Activated CD4-positive, alpha-beta memory T cell treated with anti-CD3 and anti-CD28 coated beads, Interleukin-2, amount 10 ng/mL, durations not matched to agents 7 days and 5 days (primary cell): ENCODE measurements at regions of chr6 and their contacts with region 1.

Region 1: GRCh38 chr6:16698997-16699868 is 62.0 kb downstream of the ATXN1 start:
- DNase-seq: no peak
- H3K4me3 Mint-ChIP-seq: peak overlapping the region; percentile 78
- H3K27ac Mint-ChIP-seq: peak overlapping the region; percentile 96
- H3K4me1 Mint-ChIP-seq: peaks cover 83% of the 10 kb centered on the region
- H3K27me3 Mint-ChIP-seq: no peaks in the 10 kb centered on the region

Region 2: GRCh38 chr6:16608444-16608843 is 90.8 kb before region 1 on chr6:
- CTCF ChIA-PET with region 1: no interaction called
- POLR2A ChIA-PET with region 1: no interaction called
- DNase-seq: no peak
- H3K4me3 Mint-ChIP-seq: no peak overlapping the region
- H3K27ac Mint-ChIP-seq: no peak overlapping the region
- H3K4me1 Mint-ChIP-seq: peaks cover 8% of the 10 kb centered on the region
- H3K27me3 Mint-ChIP-seq: no peaks in the 10 kb centered on the region

Region 3: GRCh38 chr6:16712931-16713484 is 13.8 kb after region 1 on chr6:
- CTCF ChIA-PET with region 1: interaction called, 13 read pairs
- POLR2A ChIA-PET with region 1: interaction called, 35 read pairs
- DNase-seq: no peak
- H3K4me3 Mint-ChIP-seq: peak overlapping the region; percentile 66
- H3K27ac Mint-ChIP-seq: peak overlapping the region; percentile 97
- H3K4me1 Mint-ChIP-seq: peaks cover 70% of the 10 kb centered on the region
- H3K27me3 Mint-ChIP-seq: no peaks in the 10 kb centered on the region